Psoas muscle (tissue), 8 donors: ENCODE measurements at regions of chr14 and their contacts with region 1.

Region 1: DNA sequence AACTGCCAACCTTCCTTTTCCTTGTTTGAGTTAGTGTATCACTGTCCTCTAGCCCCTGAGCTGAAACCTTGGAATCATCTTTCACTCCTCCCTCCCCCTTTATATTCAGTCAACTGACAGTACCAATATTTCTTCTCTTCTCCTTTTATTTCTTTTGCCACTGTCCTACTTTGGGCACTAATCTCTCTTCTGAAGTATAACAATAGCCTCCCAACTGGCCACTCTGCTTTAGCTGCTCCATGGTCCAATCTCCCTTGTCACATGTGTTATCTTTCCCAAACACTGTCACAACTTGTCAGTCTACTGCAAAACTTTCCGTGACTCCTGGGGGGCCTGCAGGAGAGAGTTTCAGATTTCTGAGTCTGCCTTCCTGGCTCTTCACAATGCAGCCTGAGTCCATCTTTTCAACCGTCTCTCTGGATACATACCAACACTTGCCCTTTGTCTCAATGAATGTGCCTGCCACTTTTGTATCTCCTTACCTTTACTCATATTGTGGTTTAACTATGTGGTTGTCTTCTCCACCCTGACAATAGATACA is 471.2 kb downstream of the DIO2 start:
- DNase-seq: no peak
- ATAC-seq: no peak
- H3K4me3 ChIP-seq: no peak overlapping the region
- H3K27ac ChIP-seq: no peak overlapping the region
- H3K4me1 ChIP-seq: no peaks in the 10 kb centered on the region
- H3K27me3 ChIP-seq: no peaks in the 10 kb centered on the region
- CTCF ChIP-seq: no peak

Region 2: DNA sequence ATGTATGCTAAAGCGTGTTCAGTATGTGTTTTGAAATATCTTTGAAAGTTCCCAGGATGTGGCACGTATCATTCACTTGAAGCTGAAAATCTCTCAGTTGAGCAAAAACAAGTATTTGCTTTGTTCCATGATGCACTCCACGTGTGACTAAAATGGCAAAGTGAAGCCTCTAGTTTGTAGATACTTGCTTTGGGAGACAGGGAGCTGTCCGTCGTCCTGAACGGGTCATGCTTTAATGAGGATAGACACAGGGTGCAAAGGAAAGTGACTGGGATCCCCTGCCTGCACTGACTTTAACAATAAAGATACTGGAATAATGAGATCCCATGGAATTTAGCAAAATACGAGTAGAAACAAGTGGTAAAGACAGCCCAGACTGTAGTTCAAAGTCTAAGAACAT is 578.6 kb before region 1 on chr14:
- intact Hi-C with region 1: loop called in 1 of 2 experiments (anchors 5 kb)
- DNase-seq: no peak
- ATAC-seq: no peak
- H3K4me3 ChIP-seq: no peak overlapping the region
- H3K27ac ChIP-seq: no peak overlapping the region
- H3K4me1 ChIP-seq: no peaks in the 10 kb centered on the region
- H3K27me3 ChIP-seq: peaks cover 0 to 3% (median 0%) of the 10 kb centered on the region in 3 donors
- CTCF ChIP-seq: no peak

Region 3: GRCh38 chr14:80176893-80177292 is 436.8 kb after region 1 on chr14:
- intact Hi-C with region 1: no loop called
- DNase-seq: no peak
- ATAC-seq: no peak
- H3K4me3 ChIP-seq: no peak overlapping the region
- H3K27ac ChIP-seq: no peak overlapping the region
- H3K4me1 ChIP-seq: no peaks in the 10 kb centered on the region
- H3K27me3 ChIP-seq: no peaks in the 10 kb centered on the region
- CTCF ChIP-seq: no peak

Region 4: GRCh38 chr14:80446356-80446755 is 706.2 kb after region 1 on chr14:
- intact Hi-C with region 1: no loop called
- DNase-seq: no peak
- ATAC-seq: no peak
- H3K4me3 ChIP-seq: no peak overlapping the region
- H3K27ac ChIP-seq: no peak overlapping the region
- H3K4me1 ChIP-seq: no peaks in the 10 kb centered on the region
- H3K27me3 ChIP-seq: no peaks in the 10 kb centered on the region
- CTCF ChIP-seq: no peak